Activated CD4-positive, alpha-beta T cell treated with anti-CD3 and anti-CD28 coated beads for 36 hours (primary cell): ENCODE measurements at regions of chr15 and their contacts with region 1.

Region 1: GRCh38 chr15:93954985-93955748 is 276.2 kb upstream of the MCTP2 start:
- DNase-seq: no peak
- ATAC-seq: no peak
- H3K4me3 Mint-ChIP-seq: no peak overlapping the region
- H3K27ac Mint-ChIP-seq: no peak overlapping the region
- H3K4me1 Mint-ChIP-seq: no peaks in the 10 kb centered on the region
- H3K27me3 Mint-ChIP-seq: no peaks in the 10 kb centered on the region

Region 2: GRCh38 chr15:93716615-93717231 is 238.4 kb before region 1 on chr15:
- CTCF ChIA-PET with region 1: no interaction called
- POLR2A ChIA-PET with region 1: no interaction called
- intact Hi-C with region 1: no loop called
- DNase-seq: no peak
- ATAC-seq: no peak
- H3K4me3 Mint-ChIP-seq: no peak overlapping the region
- H3K27ac Mint-ChIP-seq: no peak overlapping the region
- H3K4me1 Mint-ChIP-seq: no peaks in the 10 kb centered on the region
- H3K27me3 Mint-ChIP-seq: peaks cover 8% of the 10 kb centered on the region

Region 3: DNA sequence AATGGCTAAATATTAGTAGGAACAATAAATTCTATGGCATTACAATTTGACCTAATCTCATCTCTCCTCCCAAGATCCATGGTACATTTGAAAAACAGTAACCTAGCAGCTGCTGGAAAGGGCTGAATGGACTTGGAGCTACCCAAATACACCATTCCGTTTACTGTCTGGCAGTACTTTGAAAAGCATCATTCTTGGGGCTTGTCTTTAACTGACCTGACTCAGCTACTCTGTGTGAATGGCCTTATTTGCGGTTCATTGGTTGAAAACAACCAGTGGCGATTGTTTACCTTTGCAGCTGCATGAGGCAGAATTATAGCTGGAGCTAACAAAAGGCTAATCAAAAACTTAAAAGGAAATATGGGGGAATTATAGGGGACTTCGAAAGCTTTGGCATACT is 35.0 kb before region 1 on chr15:
- CTCF ChIA-PET with region 1: no interaction called
- POLR2A ChIA-PET with region 1: no interaction called
- intact Hi-C with region 1: loop called in 1 of 2 experiments (anchors 1 kb)
- DNase-seq: no peak
- ATAC-seq: no peak
- H3K4me3 Mint-ChIP-seq: no peak overlapping the region
- H3K27ac Mint-ChIP-seq: no peak overlapping the region
- H3K4me1 Mint-ChIP-seq: no peaks in the 10 kb centered on the region
- H3K27me3 Mint-ChIP-seq: peaks cover 4% of the 10 kb centered on the region

Region 4: GRCh38 chr15:93942269-93942694 is 12.9 kb before region 1 on chr15:
- CTCF ChIA-PET with region 1: no interaction called
- POLR2A ChIA-PET with region 1: no interaction called
- intact Hi-C with region 1: no loop called
- DNase-seq: no peak
- ATAC-seq: no peak
- H3K4me3 Mint-ChIP-seq: no peak overlapping the region
- H3K27ac Mint-ChIP-seq: no peak overlapping the region
- H3K4me1 Mint-ChIP-seq: no peaks in the 10 kb centered on the region
- H3K27me3 Mint-ChIP-seq: no peaks in the 10 kb centered on the region

Region 5: DNA sequence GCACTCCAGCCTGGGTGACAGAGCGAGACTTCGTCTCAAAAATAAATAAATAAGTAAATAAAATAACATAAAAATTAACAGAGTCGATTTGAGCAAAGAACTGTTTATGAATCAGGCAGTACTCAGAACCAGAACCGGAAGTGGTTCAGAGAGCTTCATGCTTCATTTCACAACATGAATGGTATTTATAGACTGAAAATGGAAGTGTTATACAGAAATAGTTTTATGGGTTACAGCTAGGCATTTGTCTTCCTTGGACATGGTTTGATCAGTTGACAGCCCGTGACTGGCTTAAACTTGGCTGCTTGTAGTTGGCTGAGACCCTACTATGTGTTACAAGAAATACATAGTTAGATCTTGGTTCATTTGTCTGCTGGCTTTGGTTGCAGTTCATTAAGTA is 60.2 kb after region 1 on chr15:
- CTCF ChIA-PET with region 1: no interaction called
- POLR2A ChIA-PET with region 1: no interaction called
- intact Hi-C with region 1: loop called in 1 of 2 experiments (anchors 10 kb)
- DNase-seq: no peak
- ATAC-seq: no peak
- H3K4me3 Mint-ChIP-seq: no peak overlapping the region
- H3K27ac Mint-ChIP-seq: no peak overlapping the region
- H3K4me1 Mint-ChIP-seq: peaks cover 6% of the 10 kb centered on the region
- H3K27me3 Mint-ChIP-seq: no peaks in the 10 kb centered on the region